ENCODE measurements at regions of chr1 and their contacts with region 1.

Region 1: DNA sequence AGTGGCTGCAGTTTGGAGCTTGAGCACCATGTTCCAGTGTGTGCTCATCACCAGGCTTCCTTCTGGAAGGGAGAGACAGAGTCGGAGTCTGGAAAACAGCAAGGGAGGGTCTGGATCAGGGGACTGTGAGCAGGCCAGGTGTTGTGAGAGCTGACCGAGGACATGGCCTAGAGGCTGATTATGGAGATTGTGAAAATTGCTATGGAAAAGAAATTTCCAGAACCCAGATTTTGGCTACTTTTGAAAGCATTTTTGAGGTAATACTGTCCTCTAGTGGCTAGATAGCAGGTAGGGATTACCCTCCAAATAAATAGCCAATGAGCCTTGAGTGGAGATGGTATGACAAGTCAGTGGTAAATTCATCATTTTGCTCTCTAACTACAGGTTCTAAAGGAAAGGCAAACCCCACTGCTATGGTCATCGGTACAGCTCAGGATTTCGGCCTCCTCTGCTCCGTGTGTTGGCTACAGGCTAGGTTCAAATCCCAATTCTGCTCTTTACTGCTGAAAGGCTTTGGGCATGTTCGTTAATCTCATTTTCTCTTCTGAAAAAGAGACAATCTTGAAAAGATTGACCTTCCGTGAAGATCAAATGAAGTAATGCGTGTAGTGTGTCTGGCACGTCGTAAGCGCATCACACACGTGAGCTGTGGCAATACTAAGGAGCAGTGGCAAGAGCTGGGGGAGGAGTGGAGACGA is 1.0 kb upstream of the HAO2 start:
- DNase-seq: no peak
- ATAC-seq: peak in 1 of 4 donors; percentile 28
- H3K4me3 ChIP-seq: no peak overlapping the region
- H3K27ac ChIP-seq: no peak overlapping the region
- H3K4me1 ChIP-seq: no peaks in the 10 kb centered on the region
- H3K27me3 ChIP-seq: peaks cover 0 to 5% (median 0%) of the 10 kb centered on the region in 9 donors
- CTCF ChIP-seq: peak; percentile 60 to 88 (median 74)
- POLR2A ChIP-seq: no peak

Region 2: DNA sequence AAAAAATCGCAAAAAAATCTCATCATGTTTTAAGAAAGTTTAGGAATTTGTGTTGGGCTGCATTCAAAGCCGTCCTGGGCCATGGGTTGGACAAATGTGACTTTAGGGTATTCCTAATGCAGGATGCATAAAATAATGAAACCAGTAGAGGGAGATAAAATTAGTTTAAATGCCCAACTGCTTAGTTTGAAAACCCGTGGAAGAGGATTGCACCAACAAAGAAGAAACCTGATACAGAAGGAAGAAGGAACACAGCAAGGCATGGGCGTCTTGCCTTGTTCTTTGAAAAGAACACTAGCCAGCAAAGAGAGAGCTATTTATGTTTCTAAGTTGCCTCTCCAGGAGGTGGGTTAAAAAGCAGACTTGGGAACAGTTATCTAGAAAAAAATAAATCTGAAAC is 1400.1 kb before region 1 on chr1:
- intact Hi-C with region 1: loop called in 1 of 10 experiments (anchors 10 kb)
- DNase-seq: no peak
- ATAC-seq: no peak
- H3K4me3 ChIP-seq: no peak overlapping the region
- H3K27ac ChIP-seq: no peak overlapping the region
- H3K4me1 ChIP-seq: no peaks in the 10 kb centered on the region
- H3K27me3 ChIP-seq: no peaks in the 10 kb centered on the region
- CTCF ChIP-seq: peak in 2 of 12 donors; percentile 7 to 14
- POLR2A ChIP-seq: no peak

Region 3: DNA sequence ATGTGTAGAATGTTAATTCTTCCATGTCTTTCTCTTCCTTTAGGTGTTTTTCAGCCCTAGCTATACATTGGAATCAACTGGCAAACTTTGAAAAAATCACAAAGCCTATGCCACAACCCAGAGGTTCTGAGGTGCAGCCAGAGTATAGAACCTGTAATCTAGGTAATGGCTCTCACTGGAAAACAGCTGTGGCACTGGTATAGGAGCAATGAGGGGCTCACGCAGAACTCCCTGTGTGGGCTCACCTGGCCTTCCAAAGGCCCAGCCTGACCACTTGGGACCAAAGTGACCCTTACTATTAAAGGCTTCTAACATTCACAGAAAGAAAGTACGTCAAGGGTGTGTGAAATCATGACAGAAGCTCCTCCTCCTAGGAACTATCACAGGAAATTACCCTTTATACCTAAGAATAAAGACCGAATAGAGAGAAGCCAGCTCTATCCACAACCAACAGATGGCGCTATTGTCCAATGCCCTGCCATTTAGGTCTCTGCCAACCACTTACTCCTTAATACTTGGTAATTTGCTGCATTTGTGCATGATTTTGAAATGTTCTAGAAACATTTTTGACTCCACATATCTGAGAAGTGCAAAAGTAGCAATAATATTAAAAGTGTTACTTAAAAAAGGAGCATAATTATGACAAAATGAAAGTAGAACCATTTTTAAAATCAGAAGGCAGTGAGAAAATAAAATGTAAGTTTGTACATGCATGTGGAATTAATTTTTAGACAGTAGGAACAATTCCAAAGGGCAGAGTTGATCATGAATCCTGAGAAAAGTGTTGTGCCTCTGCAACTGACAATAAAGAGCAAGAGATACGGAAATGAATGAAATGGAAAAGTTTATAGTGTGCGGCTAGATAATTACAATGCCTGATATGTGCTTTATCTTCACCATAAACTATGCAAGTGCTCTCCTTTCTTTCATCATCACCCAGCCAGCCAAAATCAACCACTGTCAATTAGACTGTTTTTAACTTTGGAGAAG is 92.1 kb before region 1 on chr1:
- intact Hi-C with region 1: loop called in 4 of 10 experiments (anchors 5 to 10 kb)
- DNase-seq: peak in 2 of 5 donors; percentile 16 to 30
- ATAC-seq: peak in 1 of 4 donors; percentile 36
- H3K4me3 ChIP-seq: no peak overlapping the region
- H3K27ac ChIP-seq: no peak overlapping the region
- H3K4me1 ChIP-seq: peaks cover 0 to 4% (median 0%) of the 10 kb centered on the region in 12 donors
- H3K27me3 ChIP-seq: no peaks in the 10 kb centered on the region
- CTCF ChIP-seq: peak; percentile 40 to 79 (median 69)
- POLR2A ChIP-seq: no peak

Region 4: GRCh38 chr1:119286587-119287181 is 80.9 kb before region 1 on chr1:
- intact Hi-C with region 1: loop called in 5 of 10 experiments (anchors 2 to 10 kb)
- DNase-seq: no peak
- ATAC-seq: peak in 1 of 4 donors; percentile 16
- H3K4me3 ChIP-seq: no peak overlapping the region
- H3K27ac ChIP-seq: no peak overlapping the region
- H3K4me1 ChIP-seq: no peaks in the 10 kb centered on the region
- H3K27me3 ChIP-seq: no peaks in the 10 kb centered on the region
- CTCF ChIP-seq: peak in 9 of 12 donors; percentile 19 to 50 (median 37)
- POLR2A ChIP-seq: no peak

Region 5: GRCh38 chr1:119431836-119432235 is 64.3 kb after region 1 on chr1:
- intact Hi-C with region 1: no loop called
- DNase-seq: no peak
- ATAC-seq: no peak
- H3K4me3 ChIP-seq: no peak overlapping the region
- H3K27ac ChIP-seq: no peak overlapping the region
- H3K4me1 ChIP-seq: no peaks in the 10 kb centered on the region
- H3K27me3 ChIP-seq: peaks cover 0 to 7% (median 0%) of the 10 kb centered on the region in 9 donors
- CTCF ChIP-seq: no peak
- POLR2A ChIP-seq: no peak